AG04449 (cell line): ENCODE measurements at regions of chr6 and their contacts with region 1.

Region 1: DNA sequence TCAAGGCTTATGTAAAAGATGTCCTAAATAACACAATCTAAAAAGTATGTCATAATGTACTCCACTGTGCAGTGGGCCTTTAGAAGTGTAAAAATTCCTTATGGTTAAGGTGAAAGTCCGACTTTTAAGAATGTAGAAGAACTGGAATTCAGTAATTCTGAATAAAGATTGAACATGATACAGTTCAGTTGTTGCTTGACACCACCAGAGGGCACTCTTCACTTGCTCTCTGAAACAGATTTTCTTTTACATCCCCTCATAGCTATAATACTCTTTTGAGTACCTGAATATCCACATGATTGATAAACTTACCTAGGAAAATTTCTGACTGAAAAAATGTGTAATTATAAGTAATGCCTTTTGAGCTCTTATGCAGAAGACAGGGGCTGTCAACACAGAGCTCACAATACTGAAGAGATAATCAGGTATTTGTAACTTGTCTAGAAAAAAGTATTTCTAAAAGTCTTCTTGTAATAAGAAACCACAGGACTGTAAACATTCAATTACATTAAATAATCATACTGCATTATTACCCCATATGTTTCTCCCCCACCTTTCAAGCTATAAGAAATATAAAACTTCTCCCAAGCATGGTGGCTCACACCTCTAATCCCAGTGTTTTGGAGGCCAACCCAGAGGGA is 92.1 kb downstream of the POPDC3 start:
- DNase-seq: no peak
- H3K4me3 ChIP-seq: no peak overlapping the region
- CTCF ChIP-seq: peak; percentile 54

Region 2: DNA sequence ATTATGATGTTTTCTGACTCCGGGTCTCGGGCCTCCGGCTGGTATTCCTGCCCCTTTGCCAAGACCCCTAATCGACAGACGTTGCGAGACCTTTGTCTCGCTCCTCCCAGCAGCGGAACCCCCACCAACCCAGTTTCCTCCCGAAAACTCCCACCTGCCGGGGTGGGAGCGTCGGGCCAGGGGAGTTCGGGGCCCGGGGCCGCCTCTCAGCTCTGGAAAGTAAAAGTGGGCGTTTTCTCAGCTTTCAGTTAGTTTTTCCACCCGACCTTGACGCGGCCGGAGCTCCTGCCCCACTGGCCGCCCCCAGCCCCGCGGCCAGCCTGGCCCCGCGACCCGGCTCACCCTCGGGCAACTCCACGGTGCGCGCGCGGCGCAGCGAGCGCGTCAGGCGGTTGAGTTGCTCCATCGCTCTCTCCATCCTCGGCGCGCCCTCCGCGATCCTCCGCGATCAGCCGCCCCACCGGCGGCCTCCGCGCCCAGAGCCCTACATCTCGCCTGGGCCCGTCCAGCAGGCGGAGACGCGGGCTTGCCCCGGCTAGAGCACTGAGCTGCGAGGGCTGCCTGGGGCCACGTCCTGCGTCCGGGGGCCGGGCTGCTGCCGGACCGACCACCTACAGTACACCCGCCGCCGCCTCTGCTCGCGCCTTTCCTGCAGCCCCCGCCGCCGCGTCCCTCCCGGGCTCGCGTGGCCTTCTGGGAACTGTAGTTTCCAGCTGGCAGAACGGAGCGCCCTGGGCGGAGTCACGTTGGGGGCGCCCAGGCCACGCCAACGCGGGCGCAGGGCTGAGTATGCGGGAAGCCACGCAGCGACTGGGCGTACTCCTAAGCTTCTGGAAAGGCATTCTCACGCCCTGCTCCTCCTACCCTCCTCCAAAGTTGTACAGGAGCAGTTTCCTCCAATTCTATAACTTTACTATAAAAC is 228.2 kb before region 1 on chr6 and contains the start of gene HACE1:
- CTCF ChIA-PET with region 1: no interaction called
- POLR2A ChIA-PET with region 1: no interaction called
- DNase-seq: peak; percentile 24
- H3K4me3 ChIP-seq: peak within 1 kb of the TSS; percentile 80
- CTCF ChIP-seq: peak; percentile 33

Region 3: DNA sequence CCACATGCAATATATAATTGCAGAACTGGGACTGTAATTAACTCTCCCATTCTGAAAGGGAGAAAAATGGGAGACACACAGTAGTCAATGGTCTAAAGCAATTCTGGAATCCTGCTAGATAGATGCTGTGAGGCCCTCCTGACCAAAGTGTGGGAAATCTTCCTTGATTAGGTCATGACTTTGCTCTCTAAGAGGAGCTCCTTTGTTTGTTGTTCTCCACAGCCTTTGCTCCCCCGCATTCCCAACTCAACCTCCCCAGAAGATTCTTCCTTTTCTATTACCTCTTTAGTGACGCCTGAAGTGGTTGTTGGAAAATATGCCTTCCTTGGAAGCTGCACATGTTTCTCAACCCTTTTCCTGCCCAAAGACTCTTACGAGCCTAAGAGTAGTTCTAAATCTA is 159.6 kb before region 1 on chr6:
- CTCF ChIA-PET with region 1: no interaction called
- POLR2A ChIA-PET with region 1: no interaction called
- DNase-seq: no peak
- H3K4me3 ChIP-seq: no peak overlapping the region
- CTCF ChIP-seq: no peak

Region 4: GRCh38 chr6:105109955-105110895 is 22.5 kb after region 1 on chr6:
- CTCF ChIA-PET with region 1: interaction called, 13 read pairs
- POLR2A ChIA-PET with region 1: no interaction called
- DNase-seq: no peak
- H3K4me3 ChIP-seq: no peak overlapping the region
- CTCF ChIP-seq: no peak

Region 5: GRCh38 chr6:105136431-105137350 is 49.0 kb after region 1 on chr6:
- CTCF ChIA-PET with region 1: interaction called, 10 read pairs
- POLR2A ChIA-PET with region 1: no interaction called
- DNase-seq: no peak
- H3K4me3 ChIP-seq: peak overlapping the region; percentile 74
- CTCF ChIP-seq: peak; percentile 47

Region 6: GRCh38 chr6:105363100-105363754 is 275.5 kb after region 1 on chr6:
- CTCF ChIA-PET with region 1: interaction called, 301 read pairs
- POLR2A ChIA-PET with region 1: interaction called, 3 read pairs
- DNase-seq: no peak
- H3K4me3 ChIP-seq: no peak overlapping the region
- CTCF ChIP-seq: peak; percentile 27

Region 7: DNA sequence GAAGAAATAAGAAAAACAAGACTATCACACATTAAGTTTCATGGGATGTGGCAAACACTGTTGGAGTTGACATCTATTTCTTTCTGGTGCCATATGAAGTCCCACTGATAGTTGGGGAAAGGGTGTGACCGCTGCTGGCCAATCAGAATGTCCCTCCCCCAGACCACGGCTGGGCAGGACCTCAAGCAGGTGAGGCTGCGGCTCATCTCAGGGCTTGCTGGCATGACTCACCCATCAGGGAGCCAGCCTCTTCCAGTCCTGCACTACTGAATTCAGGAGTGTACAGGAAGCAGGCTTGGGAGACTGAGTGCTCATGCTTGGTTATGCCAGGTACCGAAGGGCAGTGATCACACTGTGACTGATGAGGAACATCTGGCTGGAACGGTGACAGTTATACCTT is 296.3 kb after region 1 on chr6:
- CTCF ChIA-PET with region 1: interaction called, 10 read pairs
- POLR2A ChIA-PET with region 1: no interaction called
- DNase-seq: no peak
- H3K4me3 ChIP-seq: no peak overlapping the region
- CTCF ChIP-seq: no peak

Region 8: GRCh38 chr6:105402939-105403935 is 315.5 kb after region 1 on chr6 and contains the start of gene PREP:
- CTCF ChIA-PET with region 1: interaction called, 67 read pairs
- POLR2A ChIA-PET with region 1: interaction called, 5 read pairs
- DNase-seq: no peak
- H3K4me3 ChIP-seq: peak within 1 kb of the TSS; percentile 95
- CTCF ChIP-seq: peak; percentile 76

Region 9: GRCh38 chr6:105431226-105431625 is 343.5 kb after region 1 on chr6:
- CTCF ChIA-PET with region 1: interaction called, 34 read pairs
- POLR2A ChIA-PET with region 1: no interaction called
- DNase-seq: no peak
- H3K4me3 ChIP-seq: no peak overlapping the region
- CTCF ChIP-seq: peak; percentile 25